Activated B cell treated with CpG ODN at 0.5 μM for 24 hours (primary cell): ENCODE measurements at regions of chr15 and their contacts with region 1.

Region 1: DNA sequence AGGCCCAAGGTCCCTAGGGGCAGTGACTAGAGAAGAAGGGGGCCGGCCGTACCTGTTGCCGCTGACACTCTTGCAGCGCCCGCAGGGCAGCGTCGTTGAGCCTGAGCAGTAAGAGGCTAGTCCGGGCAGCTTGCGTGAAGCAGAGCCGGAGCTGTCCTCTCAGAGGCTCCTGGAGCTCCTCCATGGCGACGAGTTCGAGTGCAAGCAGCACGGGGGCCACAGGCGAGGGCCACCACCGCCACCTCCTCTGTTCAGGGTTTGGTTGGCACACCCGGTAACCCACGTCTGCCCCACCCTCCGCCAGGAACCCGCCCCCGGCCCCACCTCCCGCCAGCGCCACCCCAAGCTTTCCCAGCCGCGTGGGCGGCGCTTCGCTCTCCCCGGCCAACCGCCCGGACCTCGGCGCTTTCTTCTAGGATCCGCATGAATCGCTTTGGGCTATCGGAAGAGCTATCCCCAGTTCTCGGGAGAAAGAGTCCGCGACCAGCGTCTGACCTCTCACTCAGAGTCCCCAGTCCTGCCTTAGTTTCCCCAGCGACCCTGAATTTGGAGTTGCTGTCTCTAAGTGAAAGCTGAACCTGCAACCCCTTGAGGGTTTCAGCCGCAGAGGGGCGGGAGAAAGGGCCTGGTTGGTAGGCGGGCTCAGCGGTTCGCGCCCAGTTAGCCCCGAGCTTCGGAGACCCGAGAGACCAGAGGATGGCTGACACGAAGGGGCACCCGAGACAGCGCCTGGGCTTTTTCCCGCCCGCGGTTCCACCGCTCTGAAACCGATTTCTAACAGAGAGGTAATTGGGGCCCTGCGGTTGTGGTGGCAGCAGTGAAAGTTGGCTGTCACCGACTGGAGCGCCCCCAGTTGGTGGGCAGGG is at the start of gene ELL3:
- DNase-seq: peak; percentile 82
- ATAC-seq: peak; percentile 69
- H3K4me3 Mint-ChIP-seq: peak within 1 kb of the TSS; percentile 96
- H3K27ac Mint-ChIP-seq: peak within 1 kb of the TSS; percentile 96
- H3K4me1 Mint-ChIP-seq: peaks cover 43% of the 10 kb centered on the region
- H3K27me3 Mint-ChIP-seq: no peaks in the 10 kb centered on the region
- CTCF ChIP-seq: no peak
- total RNA-seq, gene ELL3: 95.5 and 108 TPM in 2 replicates

Region 2: GRCh38 chr15:43749690-43750345 is 27.1 kb before region 1 on chr15:
- CTCF ChIA-PET with region 1: interaction called, 5 read pairs
- POLR2A ChIA-PET with region 1: interaction called, 107 read pairs
- intact Hi-C with region 1: loop called (anchors 1 kb)
- DNase-seq: no peak
- ATAC-seq: peak; percentile 41
- H3K4me3 Mint-ChIP-seq: peak overlapping the region; percentile 72
- H3K27ac Mint-ChIP-seq: peak overlapping the region; percentile 87
- H3K4me1 Mint-ChIP-seq: peaks cover 70% of the 10 kb centered on the region
- H3K27me3 Mint-ChIP-seq: no peaks in the 10 kb centered on the region
- CTCF ChIP-seq: no peak

Region 3: GRCh38 chr15:43800286-43801141 is 23.6 kb after region 1 on chr15 and contains the start of gene HYPK:
- CTCF ChIA-PET with region 1: interaction called, 8 read pairs
- POLR2A ChIA-PET with region 1: interaction called, 509 read pairs
- intact Hi-C with region 1: loop called (anchors 1 kb)
- DNase-seq: peak; percentile 83
- ATAC-seq: peak; percentile 98
- H3K4me3 Mint-ChIP-seq: peak within 1 kb of the TSS; percentile 98
- H3K27ac Mint-ChIP-seq: peak within 1 kb of the TSS; percentile 96
- H3K4me1 Mint-ChIP-seq: peaks cover 51% of the 10 kb centered on the region
- H3K27me3 Mint-ChIP-seq: no peaks in the 10 kb centered on the region
- CTCF ChIP-seq: no peak
- total RNA-seq, gene HYPK: 19.2 and 19.7 TPM in 2 replicates

Region 4: DNA sequence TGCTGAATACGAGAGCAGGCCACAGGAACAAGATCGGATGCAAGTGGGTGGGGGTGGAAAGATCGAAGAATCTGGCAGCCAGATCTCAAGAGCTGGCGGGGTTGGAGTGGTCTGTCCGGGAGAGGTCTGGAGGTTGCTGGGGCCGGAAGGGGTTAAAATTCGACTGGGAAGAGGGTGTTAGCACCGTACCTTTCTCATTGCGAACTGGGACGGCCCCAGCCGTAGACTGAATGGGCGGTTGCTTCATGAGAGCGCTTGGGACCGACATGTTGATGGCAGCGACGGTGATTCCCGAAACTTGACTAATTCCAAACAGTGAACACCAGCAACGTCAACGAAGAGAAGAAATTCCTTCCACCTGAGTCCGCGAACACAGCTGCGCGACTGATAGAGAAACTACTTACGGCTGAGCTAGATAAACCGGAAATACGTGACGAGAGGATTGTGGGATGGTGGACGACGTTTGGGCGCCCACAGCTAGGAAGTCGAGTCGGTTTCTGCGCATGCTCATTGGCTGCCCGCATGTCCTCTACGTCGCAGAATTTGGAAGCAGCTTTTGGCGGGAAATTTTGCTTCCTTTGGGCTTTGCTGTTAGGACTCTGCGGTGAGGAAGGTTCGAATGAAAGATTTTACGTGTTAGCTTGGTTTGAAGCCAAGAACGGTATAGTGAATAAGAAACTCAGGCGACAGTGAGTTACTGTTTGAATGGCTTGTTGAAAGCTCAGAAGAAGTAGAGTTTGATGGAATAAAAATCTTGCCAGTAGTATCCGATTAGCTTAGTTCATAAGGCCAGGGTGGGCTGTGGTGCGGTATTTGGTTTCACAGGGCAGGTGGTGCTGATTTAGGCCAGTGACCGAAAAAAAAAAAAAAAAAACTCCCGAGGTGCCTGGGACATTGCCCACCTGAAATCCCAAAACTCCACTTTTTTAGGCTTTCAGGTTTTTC is 47.6 kb after region 1 on chr15 and contains the start of gene MFAP1:
- CTCF ChIA-PET with region 1: interaction called, 8 read pairs
- POLR2A ChIA-PET with region 1: interaction called, 35 read pairs
- intact Hi-C with region 1: loop called (anchors 1 kb)
- DNase-seq: peak; percentile 72
- ATAC-seq: peak; percentile 86
- H3K4me3 Mint-ChIP-seq: peak within 1 kb of the TSS; percentile 99
- H3K27ac Mint-ChIP-seq: peak within 1 kb of the TSS; percentile 99
- H3K4me1 Mint-ChIP-seq: peaks cover 62% of the 10 kb centered on the region
- H3K27me3 Mint-ChIP-seq: no peaks in the 10 kb centered on the region
- CTCF ChIP-seq: no peak
- total RNA-seq, gene MFAP1: 26.1 and 27.9 TPM in 2 replicates

Region 5: DNA sequence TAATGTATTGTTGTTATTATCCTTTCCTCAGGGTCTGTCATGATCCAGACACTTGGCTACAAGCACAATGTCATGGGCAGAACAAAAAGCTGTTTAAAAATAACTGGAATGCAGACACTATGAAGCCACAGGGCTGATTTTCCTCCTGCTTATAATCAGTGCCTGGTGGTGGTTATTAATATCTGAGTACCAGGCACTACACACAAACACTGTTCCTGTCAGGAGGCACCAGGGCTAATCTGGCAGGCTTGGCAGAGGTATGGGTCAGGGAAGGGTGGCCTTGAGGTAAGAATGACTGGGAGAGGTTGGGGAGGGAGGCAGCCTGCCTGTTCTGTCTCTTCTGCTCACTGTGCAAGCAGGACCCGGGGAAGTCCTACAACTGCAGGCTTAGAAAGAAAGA is 117.0 kb after region 1 on chr15:
- CTCF ChIA-PET with region 1: no interaction called
- POLR2A ChIA-PET with region 1: no interaction called
- intact Hi-C with region 1: no loop called
- DNase-seq: no peak
- ATAC-seq: no peak
- H3K4me3 Mint-ChIP-seq: no peak overlapping the region
- H3K27ac Mint-ChIP-seq: no peak overlapping the region
- H3K4me1 Mint-ChIP-seq: no peaks in the 10 kb centered on the region
- H3K27me3 Mint-ChIP-seq: no peaks in the 10 kb centered on the region
- CTCF ChIP-seq: no peak

Region 6: DNA sequence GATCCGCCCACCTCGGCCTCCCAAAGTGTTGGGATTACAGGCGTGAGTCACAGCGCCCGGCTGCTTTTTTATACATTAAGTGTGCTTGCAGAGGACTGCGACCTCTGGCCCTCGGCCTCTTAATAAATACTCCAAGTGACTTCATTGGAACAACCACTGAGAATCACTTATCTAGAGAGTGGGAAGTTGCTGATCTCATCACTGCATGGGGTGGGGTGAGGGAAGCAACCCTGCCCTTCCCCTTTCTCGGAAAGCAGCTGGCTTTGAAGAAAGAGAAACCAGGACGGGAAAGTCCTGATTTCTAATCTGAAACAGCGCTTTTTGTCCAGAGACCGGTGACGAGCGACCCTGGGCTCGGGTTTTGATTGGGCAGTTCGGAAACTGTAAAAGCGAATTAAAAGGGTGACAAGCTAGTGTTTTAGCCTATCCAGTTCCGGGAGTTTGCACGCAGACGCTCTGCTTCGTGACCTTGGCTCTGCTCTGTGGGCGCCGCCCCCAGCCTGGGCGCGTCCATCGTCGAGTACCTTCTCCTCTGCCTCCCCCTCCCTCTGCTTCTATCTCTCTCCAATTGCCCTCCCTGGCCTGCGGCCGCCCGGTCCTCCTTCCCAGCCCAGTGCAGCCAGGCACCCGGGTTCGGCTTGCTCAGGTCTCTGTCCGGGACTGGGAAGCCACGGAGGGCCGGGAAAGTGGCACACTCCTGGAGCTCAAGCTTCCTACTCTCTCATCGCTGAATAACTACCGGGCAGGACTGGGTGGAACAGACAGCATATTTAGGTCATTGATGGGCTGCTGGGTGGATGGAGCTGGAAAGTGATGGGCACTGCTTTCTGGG is 951.8 kb after region 1 on chr15:
- CTCF ChIA-PET with region 1: no interaction called
- POLR2A ChIA-PET with region 1: interaction called, 4 read pairs
- intact Hi-C with region 1: loop called (anchors 2 kb)
- DNase-seq: peak; percentile 86
- ATAC-seq: peak; percentile 74
- H3K4me3 Mint-ChIP-seq: peak overlapping the region; percentile 99
- H3K27ac Mint-ChIP-seq: peak overlapping the region; percentile 100
- H3K4me1 Mint-ChIP-seq: peaks cover 75% of the 10 kb centered on the region
- H3K27me3 Mint-ChIP-seq: no peaks in the 10 kb centered on the region
- CTCF ChIP-seq: no peak